ENCODE measurements at regions of chr10 and their contacts with region 1.

Region 1: DNA sequence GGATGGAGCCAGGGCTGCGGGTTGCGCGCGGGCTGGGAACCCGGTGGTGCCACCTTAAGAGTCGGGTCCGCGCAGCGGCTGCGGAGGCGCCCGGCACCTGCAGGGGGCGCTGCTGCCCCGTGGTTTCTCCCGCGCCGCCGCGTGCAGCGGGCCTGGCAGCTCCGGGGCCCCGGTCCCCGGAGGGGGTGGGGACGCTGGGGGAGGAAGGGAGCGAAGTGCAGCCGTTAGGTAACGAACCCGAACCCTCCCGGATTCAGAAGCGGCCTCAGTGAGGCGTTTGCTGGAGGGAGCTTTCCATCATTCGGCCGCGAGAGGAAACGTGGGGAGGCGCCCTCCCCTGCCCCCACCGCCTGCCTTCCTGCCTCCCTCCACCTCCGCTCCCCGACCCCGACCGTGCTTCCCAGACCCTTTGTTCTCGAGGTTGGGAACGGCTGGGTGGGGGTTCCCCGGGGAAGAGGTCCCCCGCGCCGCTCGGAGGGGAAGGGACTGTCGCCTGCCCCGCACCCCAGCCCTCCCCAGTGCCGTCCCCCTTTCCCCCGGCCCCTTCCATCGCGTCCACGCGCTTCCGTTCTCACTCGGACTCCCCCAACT is 29.6 kb downstream of the SKIDA1 start:
- DNase-seq: peak; percentile 86
- ATAC-seq: peak; percentile 84
- H3K4me3 Mint-ChIP-seq: peak overlapping the region; percentile 78
- H3K27ac Mint-ChIP-seq: no peak overlapping the region
- H3K4me1 Mint-ChIP-seq: peaks cover 15% of the 10 kb centered on the region
- H3K27me3 Mint-ChIP-seq: peaks cover 56% of the 10 kb centered on the region
- CTCF ChIP-seq: peak; percentile 96

Region 2: DNA sequence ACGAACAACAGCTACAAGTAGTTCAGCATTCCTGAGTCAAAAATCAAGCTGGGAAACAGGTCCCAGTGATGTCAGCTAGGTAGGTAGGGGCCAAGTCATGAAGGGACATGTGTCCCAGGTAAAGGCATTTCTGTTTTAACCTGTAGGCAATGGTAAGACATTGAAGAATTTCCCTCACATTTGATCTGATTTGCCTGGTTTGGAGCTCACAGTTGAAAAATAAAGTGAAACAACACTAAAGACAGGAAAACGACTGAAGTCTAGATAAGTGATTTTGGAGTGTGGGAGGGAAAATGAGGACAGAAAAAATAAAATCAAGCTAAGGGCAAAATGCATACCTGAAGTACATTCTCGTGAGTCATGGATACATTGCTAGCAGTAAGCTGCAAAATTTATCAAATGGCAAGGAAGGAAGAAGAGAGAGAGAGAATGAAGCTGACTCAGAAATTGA is 140.3 kb before region 1 on chr10:
- CTCF ChIA-PET with region 1: no interaction called
- POLR2A ChIA-PET with region 1: no interaction called
- intact Hi-C with region 1: no loop called
- DNase-seq: no peak
- ATAC-seq: no peak
- H3K4me3 Mint-ChIP-seq: no peak overlapping the region
- H3K27ac Mint-ChIP-seq: no peak overlapping the region
- H3K4me1 Mint-ChIP-seq: no peaks in the 10 kb centered on the region
- H3K27me3 Mint-ChIP-seq: peaks cover 1% of the 10 kb centered on the region
- CTCF ChIP-seq: no peak

Region 3: GRCh38 chr10:21516242-21517131 is 20.6 kb after region 1 on chr10:
- CTCF ChIA-PET with region 1: interaction called, 23 read pairs
- POLR2A ChIA-PET with region 1: interaction called, 3 read pairs
- intact Hi-C with region 1: no loop called
- DNase-seq: peak; percentile 59
- ATAC-seq: peak; percentile 66
- H3K4me3 Mint-ChIP-seq: peak overlapping the region; percentile 80
- H3K27ac Mint-ChIP-seq: no peak overlapping the region
- H3K4me1 Mint-ChIP-seq: peaks cover 34% of the 10 kb centered on the region
- H3K27me3 Mint-ChIP-seq: peaks cover 73% of the 10 kb centered on the region
- CTCF ChIP-seq: no peak

Region 4: GRCh38 chr10:21525367-21526183 is 29.7 kb after region 1 on chr10 and contains the start of gene SKIDA1:
- CTCF ChIA-PET with region 1: interaction called, 20 read pairs
- POLR2A ChIA-PET with region 1: interaction called, 4 read pairs
- intact Hi-C with region 1: loop called (anchors 5 kb)
- DNase-seq: peak; percentile 65
- ATAC-seq: peak; percentile 70
- H3K4me3 Mint-ChIP-seq: peak within 1 kb of the TSS; percentile 80
- H3K27ac Mint-ChIP-seq: peak within 1 kb of the TSS; percentile 94
- H3K4me1 Mint-ChIP-seq: peaks cover 26% of the 10 kb centered on the region
- H3K27me3 Mint-ChIP-seq: peaks cover 41% of the 10 kb centered on the region
- CTCF ChIP-seq: no peak
- total RNA-seq, gene SKIDA1: 0.11 to 0.36 TPM

Region 5: DNA sequence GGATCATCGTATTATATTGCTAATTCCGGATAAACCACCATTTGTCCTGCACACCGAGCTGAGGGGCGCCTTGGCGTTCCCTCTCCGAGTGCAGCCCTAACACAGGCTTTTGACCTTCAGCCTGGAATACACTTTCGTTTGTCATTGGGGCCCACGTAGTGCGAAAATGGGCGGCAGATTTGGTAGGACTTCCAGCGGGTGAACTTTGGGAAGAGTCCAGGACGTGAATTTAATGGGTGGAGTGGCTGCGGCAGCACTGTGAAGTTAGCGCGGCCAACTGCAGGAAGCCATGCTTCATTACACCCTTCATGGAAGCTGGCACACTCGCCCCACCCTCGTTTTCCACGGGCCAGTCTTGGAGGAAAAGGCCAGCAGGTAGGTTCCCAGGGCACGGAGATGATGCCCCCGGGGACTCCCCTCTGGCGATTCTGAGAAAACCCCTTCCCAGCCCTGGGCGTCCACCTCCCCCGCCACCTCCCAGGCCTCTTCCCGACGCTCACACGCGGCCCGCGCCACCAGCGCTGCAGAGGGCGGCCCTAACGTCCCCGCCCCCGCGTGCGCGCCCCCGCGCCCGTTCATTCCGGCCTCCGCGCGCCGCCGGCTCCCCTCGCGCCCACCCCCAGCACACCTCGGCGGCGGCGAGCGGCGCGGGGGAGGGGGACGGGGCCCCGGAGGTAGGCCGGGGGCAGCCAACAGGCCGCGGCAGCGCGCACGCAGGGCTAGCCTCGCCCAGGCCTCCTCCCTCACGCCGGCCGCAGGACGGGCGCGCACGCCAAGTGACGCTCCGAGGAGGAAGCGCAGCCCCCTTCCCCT is 37.8 kb after region 1 on chr10 and contains the start of gene MLLT10:
- CTCF ChIA-PET with region 1: interaction called, 20 read pairs
- POLR2A ChIA-PET with region 1: interaction called, 3 read pairs
- intact Hi-C with region 1: loop called (anchors 5 kb)
- DNase-seq: peak; percentile 93
- ATAC-seq: peak; percentile 91
- H3K4me3 Mint-ChIP-seq: peak within 1 kb of the TSS; percentile 85
- H3K27ac Mint-ChIP-seq: peak within 1 kb of the TSS; percentile 95
- H3K4me1 Mint-ChIP-seq: peaks cover 26% of the 10 kb centered on the region
- H3K27me3 Mint-ChIP-seq: no peaks in the 10 kb centered on the region
- CTCF ChIP-seq: peak; percentile 35
- total RNA-seq, gene MLLT10: 33.9 to 36.4 TPM

Region 6: GRCh38 chr10:21732067-21732772 is 236.4 kb after region 1 on chr10:
- CTCF ChIA-PET with region 1: interaction called, 58 read pairs
- POLR2A ChIA-PET with region 1: no interaction called
- intact Hi-C with region 1: loop called (anchors 5 kb)
- DNase-seq: peak; percentile 57
- ATAC-seq: peak; percentile 95
- H3K4me3 Mint-ChIP-seq: no peak overlapping the region
- H3K27ac Mint-ChIP-seq: no peak overlapping the region
- H3K4me1 Mint-ChIP-seq: peaks cover 24% of the 10 kb centered on the region
- H3K27me3 Mint-ChIP-seq: no peaks in the 10 kb centered on the region
- CTCF ChIP-seq: peak; percentile 84

Region 7: DNA sequence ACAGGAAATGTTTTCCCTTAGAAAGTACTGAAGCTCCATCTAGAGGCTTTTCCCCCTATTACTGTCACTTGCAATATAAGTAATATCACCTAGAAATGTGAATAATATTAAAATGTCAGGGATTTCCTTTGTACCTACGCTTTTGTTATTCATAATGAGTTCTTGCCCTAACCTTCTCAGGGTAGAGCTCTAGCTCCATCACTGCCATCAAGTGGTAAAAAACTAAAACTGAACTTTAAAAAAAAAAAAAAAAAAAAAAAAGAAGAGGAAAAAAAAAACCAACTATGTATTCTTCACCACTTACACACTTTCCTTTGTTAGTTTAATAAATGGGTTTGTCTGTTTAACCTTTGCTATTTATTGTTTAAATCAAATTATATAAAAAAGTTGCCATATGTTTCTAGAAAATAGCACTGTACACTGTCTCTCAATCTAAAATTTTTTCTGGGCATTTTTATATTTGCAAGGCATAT is 457.8 kb after region 1 on chr10:
- CTCF ChIA-PET with region 1: interaction called, 9 read pairs
- POLR2A ChIA-PET with region 1: no interaction called
- intact Hi-C with region 1: loop called (anchors 2 kb)
- DNase-seq: no peak
- ATAC-seq: peak; percentile 95
- H3K4me3 Mint-ChIP-seq: no peak overlapping the region
- H3K27ac Mint-ChIP-seq: no peak overlapping the region
- H3K4me1 Mint-ChIP-seq: peaks cover 9% of the 10 kb centered on the region
- H3K27me3 Mint-ChIP-seq: no peaks in the 10 kb centered on the region
- CTCF ChIP-seq: peak; percentile 67

Region 8: DNA sequence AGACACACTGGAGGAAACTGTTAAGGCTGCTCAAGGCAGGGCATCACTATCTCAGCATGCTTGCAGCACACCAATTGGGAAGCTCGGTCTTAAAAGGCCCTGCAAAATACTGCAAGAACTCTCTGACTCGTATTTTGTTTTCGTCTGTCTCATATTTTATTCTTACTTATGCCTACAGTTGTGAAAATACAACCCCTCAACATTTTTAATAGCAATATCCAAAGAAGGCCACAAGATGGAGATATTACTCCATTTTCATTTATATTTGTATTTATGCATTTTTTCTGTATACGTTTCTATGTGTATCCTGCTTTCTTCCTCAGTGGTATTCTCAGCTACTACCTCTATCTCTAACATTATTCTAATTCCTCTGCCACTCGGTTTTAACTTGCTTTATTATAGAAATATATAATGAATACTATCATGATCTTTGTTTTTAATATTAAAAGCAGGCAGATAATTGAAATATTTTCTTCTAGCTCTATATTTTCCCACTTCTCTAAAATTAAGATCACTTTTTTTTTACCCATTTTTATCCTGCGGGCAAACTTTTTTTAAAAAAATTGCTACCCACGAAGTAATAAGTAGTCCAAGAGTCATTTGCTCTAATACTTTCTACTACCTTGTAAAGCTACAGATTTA is 497.6 kb after region 1 on chr10:
- CTCF ChIA-PET with region 1: interaction called, 16 read pairs
- POLR2A ChIA-PET with region 1: no interaction called
- intact Hi-C with region 1: no loop called
- DNase-seq: no peak
- ATAC-seq: peak; percentile 10
- H3K4me3 Mint-ChIP-seq: no peak overlapping the region
- H3K27ac Mint-ChIP-seq: no peak overlapping the region
- H3K4me1 Mint-ChIP-seq: peaks cover 16% of the 10 kb centered on the region
- H3K27me3 Mint-ChIP-seq: no peaks in the 10 kb centered on the region
- CTCF ChIP-seq: peak; percentile 72

Measured in activated CD8-positive, alpha-beta T cell treated with anti-CD3 and anti-CD28 coated beads for 36 hours (primary cell).